Tibial artery (tissue), 4 donors: ENCODE measurements at regions of chr10 and their contacts with region 1.

Region 1: DNA sequence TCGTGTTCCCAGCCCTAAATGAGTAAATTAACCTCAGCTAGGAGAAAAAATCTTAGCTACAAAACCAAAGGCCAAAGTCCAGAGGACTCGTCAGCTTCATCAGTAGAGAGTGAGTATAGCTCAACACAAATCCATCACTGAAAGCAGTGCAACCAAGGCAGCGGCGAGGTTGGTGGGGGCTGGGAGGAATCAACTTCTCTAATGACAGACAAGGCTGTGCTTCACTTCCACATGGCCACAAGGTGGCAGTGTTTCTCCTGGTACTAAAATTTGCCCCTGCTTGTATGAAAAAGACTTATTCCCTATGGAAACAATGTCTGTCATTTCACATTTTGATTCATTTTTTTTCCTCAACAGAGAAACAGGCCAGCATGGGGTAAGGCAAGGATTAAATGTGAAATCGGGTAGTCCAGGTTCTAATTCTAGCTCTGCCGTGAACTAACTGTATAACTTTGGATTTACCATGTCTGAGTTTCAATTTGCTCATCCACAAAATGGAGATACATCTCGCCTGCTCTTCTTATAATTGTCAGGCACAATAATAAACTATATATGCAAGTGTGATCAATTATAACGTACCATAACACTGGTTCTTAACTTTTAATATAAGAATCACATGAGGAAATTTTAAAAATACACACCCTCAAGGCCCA is 39.3 kb downstream of the FAS start:
- DNase-seq: peak; percentile 78 to 83
- H3K4me3 ChIP-seq: no peak overlapping the region
- H3K27ac ChIP-seq: no peak overlapping the region
- H3K4me1 ChIP-seq: peaks cover 0 to 17% (median 6%) of the 10 kb centered on the region in 4 donors
- H3K27me3 ChIP-seq: no peaks in the 10 kb centered on the region
- CTCF ChIP-seq: peak; percentile 87 to 90

Region 2: GRCh38 chr10:87504640-87505365 is 1525.1 kb before region 1 on chr10 and contains the start of gene MINPP1:
- intact Hi-C with region 1: no loop called
- DNase-seq: peak; percentile 80 to 88
- H3K4me3 ChIP-seq: peak within 1 kb of the TSS; percentile 82 to 96
- H3K27ac ChIP-seq: peak within 1 kb of the TSS; percentile 78 to 89
- H3K4me1 ChIP-seq: peaks cover 0 to 34% (median 17%) of the 10 kb centered on the region in 4 donors
- H3K27me3 ChIP-seq: no peaks in the 10 kb centered on the region
- CTCF ChIP-seq: no peak

Region 3: GRCh38 chr10:88848499-88848898 is 181.4 kb before region 1 on chr10:
- intact Hi-C with region 1: loop called (anchors 10 kb)
- DNase-seq: no peak
- H3K4me3 ChIP-seq: no peak overlapping the region
- H3K27ac ChIP-seq: no peak overlapping the region
- H3K4me1 ChIP-seq: no peaks in the 10 kb centered on the region
- H3K27me3 ChIP-seq: no peaks in the 10 kb centered on the region
- CTCF ChIP-seq: no peak

Region 4: DNA sequence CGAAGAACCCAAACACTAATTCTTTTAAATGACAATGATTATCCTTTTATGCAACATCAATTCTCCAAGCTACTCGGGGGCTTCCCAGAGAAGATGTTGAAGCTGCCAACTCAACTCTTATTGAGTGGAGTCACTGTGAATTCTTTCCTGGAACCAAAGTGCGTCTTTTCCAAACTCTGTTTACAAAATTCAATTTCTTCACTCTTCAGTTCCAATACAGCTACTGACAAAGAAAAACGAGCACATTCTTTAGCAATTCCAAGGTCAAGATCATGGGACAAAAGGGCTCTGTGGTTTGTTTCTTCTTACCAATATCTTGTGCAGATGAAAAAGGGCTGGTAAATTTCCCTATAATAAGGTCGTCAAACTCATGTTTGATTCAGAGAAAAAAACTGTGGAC is 34.8 kb after region 1 on chr10:
- intact Hi-C with region 1: no loop called
- DNase-seq: no peak
- H3K4me3 ChIP-seq: no peak overlapping the region
- H3K27ac ChIP-seq: no peak overlapping the region
- H3K4me1 ChIP-seq: peaks cover 0 to 29% (median 4%) of the 10 kb centered on the region in 4 donors
- H3K27me3 ChIP-seq: no peaks in the 10 kb centered on the region
- CTCF ChIP-seq: no peak

Region 5: DNA sequence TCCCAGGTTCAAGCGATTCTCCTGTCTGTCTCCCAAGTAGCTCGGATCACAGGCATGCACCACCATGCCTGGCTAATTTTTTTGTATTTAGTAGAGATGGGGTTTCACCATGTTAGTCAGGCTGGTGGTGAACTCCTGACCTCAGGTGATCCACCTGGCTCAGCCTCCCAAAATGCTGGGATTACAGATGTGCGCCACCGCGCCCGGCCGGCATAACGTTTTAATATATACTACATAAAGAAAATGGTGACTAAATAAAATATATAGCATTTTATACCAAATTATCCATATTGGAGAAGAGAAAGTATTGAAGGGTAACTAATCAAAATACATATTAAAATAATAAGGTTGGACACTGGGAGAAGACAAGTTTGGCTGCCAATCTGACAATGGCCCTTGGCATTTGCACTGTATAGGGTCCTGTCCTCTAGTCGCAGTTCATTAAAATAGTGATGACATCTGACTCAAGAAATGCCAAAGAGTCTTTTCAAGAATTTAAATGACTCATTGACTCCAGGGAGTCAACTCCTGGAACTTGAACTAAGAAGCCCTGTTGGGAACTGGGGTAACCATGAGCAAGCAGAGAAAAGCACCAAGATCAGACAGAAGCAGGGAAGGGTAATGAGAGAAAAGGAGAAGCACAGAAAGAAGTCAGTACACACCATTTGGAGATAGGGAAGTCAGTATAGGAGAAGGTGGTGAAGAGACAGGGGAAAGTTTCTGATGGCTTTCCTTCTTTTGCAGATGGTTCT is 86.1 kb after region 1 on chr10:
- intact Hi-C with region 1: loop called (anchors 10 kb)
- DNase-seq: no peak
- H3K4me3 ChIP-seq: no peak overlapping the region
- H3K27ac ChIP-seq: no peak overlapping the region
- H3K4me1 ChIP-seq: peaks cover 0 to 10% (median 0%) of the 10 kb centered on the region in 4 donors
- H3K27me3 ChIP-seq: no peaks in the 10 kb centered on the region
- CTCF ChIP-seq: no peak

Region 6: DNA sequence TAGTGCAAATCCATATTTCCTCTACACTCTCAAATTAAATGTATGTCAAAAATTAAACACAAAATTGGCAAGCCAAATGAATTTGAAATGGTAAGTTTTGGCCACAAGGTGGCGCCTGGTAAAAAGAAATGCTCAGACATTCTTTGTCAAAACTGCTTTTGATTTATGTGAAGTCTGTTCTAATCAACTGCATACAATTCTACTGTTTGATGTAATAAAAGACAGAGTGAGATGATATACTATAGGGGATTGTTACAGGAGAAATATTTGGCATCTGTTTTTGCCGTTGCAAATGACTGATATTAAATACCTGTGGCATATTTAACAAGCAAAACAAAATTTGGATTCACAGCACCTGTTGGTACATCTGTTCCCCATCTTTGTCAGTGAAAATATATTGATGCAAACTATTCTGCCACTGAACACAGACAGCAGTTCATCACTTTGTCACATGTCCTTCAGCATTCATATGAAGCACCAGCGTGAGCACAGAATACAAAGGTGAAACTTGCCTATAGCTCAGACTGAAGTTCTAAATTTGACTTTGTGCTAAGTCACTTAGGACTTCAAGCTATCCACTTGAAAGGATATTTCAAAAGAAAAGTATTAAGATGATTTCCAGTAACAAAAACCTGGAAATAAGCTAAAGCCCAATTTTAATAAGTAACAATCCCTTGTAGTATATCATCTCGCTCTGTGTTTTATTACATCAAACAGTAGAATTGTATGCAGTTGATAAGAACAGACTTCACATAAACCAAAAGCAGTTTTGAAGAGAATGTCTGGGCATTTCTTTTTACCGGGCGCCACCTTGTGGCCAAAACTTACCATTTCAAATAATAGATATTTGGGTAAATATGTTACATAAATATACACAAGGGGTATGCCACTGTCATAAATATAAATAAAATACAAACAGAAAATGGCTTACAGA is 187.4 kb after region 1 on chr10:
- intact Hi-C with region 1: loop called (anchors 2 kb)
- DNase-seq: no peak
- H3K4me3 ChIP-seq: no peak overlapping the region
- H3K27ac ChIP-seq: peak overlapping the region; percentile 41 to 45
- H3K4me1 ChIP-seq: peaks cover 0 to 6% (median 1%) of the 10 kb centered on the region in 4 donors
- H3K27me3 ChIP-seq: no peaks in the 10 kb centered on the region
- CTCF ChIP-seq: peak; percentile 68 to 69

Region 7: DNA sequence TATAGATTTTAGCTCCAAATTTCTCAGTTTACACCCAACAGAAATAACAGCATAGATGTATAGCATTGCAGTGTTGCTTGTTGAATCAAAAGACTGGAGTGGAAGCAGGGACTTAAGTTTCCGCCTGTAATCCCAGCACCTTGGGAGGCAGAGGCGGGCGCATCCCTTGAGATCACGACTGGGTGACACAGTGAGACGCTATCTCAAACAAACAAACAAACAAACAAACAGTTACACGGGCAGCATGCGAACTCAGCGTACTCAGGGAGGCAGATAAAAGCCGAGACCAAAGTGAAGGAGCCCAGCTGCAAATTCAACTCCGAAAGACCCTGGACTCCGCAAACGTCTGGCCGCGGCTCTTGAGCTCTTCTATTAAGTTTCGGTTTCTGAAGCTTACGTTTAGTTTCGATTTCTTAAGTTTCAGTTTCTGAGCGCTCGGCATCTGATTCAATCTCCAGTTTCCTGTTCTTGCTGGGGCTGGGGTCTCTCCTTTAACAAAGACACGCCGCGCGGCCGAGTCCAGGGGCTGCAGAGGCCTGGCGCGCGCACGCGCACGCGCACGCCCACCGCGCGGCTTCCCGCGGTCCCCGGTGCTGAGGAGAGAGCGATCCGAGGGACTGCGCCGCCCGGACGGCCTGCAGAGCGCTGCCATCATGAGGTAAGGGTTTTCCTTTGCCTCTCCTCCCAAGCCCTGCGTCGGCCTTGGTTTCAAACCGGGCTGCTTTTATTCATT is 384.4 kb after region 1 on chr10 and contains the start of gene IFIT5:
- intact Hi-C with region 1: no loop called
- DNase-seq: peak; percentile 73 to 83
- H3K4me3 ChIP-seq: peak within 1 kb of the TSS; percentile 70 to 91
- H3K27ac ChIP-seq: peak within 1 kb of the TSS; percentile 88 to 92
- H3K4me1 ChIP-seq: peaks cover 0 to 40% (median 15%) of the 10 kb centered on the region in 4 donors
- H3K27me3 ChIP-seq: no peaks in the 10 kb centered on the region
- CTCF ChIP-seq: no peak